ENCODE measurements at regions of chr19 and their contacts with region 1.

Region 1: DNA sequence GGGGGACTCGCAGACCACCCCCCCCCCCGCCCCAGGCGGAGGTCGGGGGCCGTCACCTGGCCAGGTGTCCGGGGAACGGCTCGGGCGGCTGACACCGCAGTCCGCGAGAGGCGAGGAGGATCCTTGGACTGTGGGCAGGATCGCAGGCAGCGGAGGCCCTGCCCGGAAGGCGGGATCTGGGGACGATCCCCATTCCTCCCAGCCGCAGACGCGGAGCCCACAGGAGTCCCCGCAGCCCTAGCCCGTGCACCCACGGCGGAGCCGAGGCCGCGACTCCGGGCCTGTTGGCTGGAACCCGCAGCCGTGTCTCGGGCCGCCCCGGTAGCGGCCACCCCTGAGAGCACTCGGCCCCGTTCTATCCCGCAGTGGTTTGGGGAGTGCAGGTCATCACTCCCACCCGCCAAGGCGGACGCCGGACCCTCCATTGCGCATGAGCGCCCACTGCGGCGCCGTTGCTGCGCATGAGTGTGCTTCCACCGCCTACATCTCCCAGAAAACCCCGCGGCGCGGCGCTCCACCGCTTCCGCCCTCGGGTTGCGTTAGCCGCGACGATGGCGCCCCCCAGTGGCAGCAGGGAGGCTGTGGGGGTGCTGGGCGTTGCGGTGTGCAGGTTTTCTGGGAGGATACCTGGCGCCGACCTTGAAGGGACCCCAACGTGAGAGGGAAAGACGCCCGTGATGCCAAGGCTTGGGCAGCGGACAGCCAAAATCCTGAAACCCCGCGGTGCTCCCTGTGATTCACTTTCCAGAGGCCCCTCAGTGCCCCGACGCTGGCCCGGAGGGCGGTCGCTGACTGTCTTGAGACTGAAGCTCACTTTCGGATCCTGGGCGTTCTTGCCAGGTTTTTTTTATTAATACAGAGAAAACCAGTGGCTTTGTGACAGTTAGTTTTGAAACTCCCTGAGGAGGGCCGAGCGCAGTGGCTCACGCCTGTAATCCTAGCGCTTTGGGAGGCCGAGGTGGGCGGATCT is 4.4 kb upstream of the ZNF329 start:
- DNase-seq: peak; percentile 93 to 100 (median 97)
- ATAC-seq: peak; percentile 91
- H3K4me3 ChIP-seq: peak overlapping the region; percentile 76
- H3K4me3 Mint-ChIP-seq: peak overlapping the region; percentile 93
- H3K27ac ChIP-seq: peak overlapping the region; percentile 52 to 62
- H3K27ac Mint-ChIP-seq: peak overlapping the region; percentile 78
- H3K4me1 ChIP-seq: peaks cover 31% of the 10 kb centered on the region
- H3K4me1 Mint-ChIP-seq: peaks cover 23% of the 10 kb centered on the region
- H3K27me3 ChIP-seq: no peaks in the 10 kb centered on the region
- H3K27me3 Mint-ChIP-seq: no peaks in the 10 kb centered on the region
- CTCF ChIP-seq: peak; percentile 97

Region 2: DNA sequence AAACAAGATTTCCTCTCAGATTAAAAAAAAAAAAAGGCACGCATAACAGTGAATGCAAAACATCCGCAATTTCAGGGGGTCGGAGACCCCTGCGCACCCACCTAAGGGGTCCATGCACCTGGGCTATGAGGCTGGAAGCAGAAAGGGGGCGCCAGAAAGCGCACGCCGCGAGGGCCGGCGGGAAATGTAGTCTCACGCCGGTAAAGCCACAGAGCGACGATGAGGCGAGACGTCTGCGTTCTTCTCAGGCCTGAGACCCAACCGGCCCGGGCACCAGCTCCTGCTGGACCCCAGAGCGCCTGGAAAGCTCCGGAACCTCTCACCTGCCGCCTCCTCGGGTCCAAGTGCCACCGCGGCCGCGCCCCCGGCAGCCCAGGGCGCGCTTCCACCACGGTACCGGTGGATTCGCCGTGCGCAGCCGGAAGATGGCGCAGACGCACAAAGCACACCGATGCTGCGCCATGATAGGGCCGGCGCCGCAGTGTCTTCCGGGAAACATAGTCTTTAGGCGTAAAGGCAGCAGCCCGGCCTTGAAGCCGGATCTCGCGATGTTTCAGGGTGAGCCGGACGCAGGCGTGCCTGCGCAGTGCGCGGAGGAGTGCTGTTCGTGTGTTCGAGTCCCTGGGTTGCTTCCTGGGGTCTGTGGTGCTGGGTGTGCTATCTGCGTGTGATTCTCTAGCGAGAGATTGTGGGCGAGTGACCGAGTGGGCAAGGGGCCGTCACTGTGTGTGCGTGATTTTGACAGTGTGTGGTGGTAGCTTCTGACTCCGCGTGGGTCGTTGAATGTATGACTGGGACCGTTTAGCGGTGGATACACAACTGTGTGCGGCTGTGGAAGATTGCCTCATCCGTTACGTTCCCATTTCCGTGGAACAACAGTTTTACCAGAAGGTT is 1761.6 kb before region 1 on chr19 and contains the start of gene ZNF582:
- CTCF ChIA-PET with region 1: no interaction called
- POLR2A ChIA-PET with region 1: no interaction called
- intact Hi-C with region 1: loop called in 1 of 2 experiments (anchors 10 kb)
- DNase-seq: peak; percentile 83 to 97 (median 89)
- ATAC-seq: peak; percentile 97
- H3K4me3 ChIP-seq: peak within 1 kb of the TSS; percentile 66
- H3K4me3 Mint-ChIP-seq: peak within 1 kb of the TSS; percentile 97
- H3K27ac ChIP-seq: peak within 1 kb of the TSS; percentile 92 to 93
- H3K27ac Mint-ChIP-seq: peak within 1 kb of the TSS; percentile 78
- H3K4me1 ChIP-seq: peaks cover 10% of the 10 kb centered on the region
- H3K4me1 Mint-ChIP-seq: peaks cover 6% of the 10 kb centered on the region
- H3K27me3 ChIP-seq: no peaks in the 10 kb centered on the region
- H3K27me3 Mint-ChIP-seq: no peaks in the 10 kb centered on the region
- CTCF ChIP-seq: peak; percentile 80
- total RNA-seq, gene ZNF582: 1.5 to 1.8 TPM

Region 3: DNA sequence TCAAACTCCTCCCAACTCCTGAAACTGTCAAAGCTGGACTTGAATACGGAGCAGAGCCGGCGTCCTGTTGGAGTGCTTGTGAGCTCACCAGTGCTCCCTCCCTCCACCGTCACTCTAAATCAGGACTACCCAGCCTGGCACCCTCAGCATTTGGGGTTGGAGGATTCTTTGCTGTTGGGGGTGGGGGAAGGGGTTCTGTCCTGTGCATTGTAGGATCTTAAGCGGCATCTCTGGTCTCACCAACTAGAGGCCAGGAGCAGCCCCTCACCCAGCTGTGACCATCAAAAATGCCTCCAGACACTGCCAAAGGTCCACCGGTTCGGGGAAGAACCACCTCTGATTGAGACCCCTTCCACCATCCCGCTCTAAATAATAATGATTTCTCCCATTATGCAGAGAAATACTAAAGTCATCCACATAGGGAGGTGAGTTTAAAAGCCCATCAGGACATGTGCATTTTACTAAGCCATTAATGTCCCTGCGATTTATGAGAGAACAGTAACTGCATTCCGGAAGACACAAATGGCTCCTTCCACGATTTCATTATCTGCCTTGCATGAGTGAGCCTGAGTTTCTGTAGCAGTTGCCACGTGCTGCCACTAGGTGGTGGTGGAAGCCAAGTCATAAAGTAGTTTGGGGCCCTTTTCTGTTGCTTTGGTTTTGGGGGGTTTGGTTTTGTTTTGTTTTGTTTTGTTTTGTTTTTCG is 1051.2 kb before region 1 on chr19:
- CTCF ChIA-PET with region 1: no interaction called
- POLR2A ChIA-PET with region 1: no interaction called
- intact Hi-C with region 1: loop called (anchors 5 kb)
- DNase-seq: peak; percentile 2 to 76 (median 42)
- ATAC-seq: peak; percentile 72
- H3K4me3 ChIP-seq: no peak overlapping the region
- H3K4me3 Mint-ChIP-seq: peak overlapping the region; percentile 8
- H3K27ac ChIP-seq: no peak overlapping the region
- H3K27ac Mint-ChIP-seq: no peak overlapping the region
- H3K4me1 ChIP-seq: peaks cover 10% of the 10 kb centered on the region
- H3K4me1 Mint-ChIP-seq: peaks cover 5% of the 10 kb centered on the region
- H3K27me3 ChIP-seq: peaks cover 8 to 14% of the 10 kb centered on the region in 2 experiments
- H3K27me3 Mint-ChIP-seq: peaks cover 5% of the 10 kb centered on the region
- CTCF ChIP-seq: peak; percentile 62

Region 4: DNA sequence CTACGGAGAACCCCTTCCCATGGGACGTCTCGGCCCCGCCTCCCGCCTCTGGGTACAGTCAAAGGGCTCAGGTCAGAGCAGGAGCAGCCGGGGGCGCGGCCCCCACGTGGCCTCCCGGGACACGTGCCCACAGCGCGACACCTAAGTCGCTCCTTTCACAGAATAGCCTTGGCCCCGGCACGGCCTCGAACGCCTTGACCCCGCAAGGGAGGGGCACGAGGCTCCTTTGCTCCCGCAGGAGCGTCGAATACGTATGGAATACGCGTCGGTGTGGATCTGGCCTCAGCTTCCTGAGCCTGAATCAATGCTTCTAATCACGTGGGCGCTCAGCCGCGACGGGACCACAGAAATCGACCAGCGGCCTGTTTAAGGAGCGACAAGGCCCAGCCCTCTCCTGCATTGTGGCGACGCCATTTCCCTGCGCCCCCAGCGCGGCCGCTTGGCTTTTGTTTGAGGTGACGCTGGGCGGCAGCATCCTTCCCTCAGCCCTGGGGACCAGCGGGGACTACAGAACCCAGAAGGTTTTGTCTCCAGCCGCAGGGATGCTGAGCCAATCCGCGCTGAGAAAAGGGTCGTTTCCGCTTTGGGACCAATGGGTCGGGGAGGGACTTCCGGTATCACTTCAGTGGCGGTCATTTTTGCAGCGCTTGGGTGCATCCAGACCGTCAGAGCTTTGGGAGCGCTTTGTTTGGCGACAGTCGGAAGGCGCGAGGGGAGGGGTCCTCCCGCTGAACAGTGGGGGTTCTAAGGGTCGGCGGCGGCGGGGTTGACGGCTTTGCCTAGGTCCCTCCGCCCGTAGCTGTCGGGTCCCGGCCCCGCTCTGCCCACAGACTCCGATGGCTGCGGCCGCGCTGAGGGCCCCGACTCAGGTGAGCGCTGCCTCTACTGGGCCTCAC is 571.2 kb before region 1 on chr19 and contains the start of gene ZIK1:
- CTCF ChIA-PET with region 1: no interaction called
- POLR2A ChIA-PET with region 1: no interaction called
- intact Hi-C with region 1: loop called in 1 of 2 experiments (anchors 10 kb)
- DNase-seq: peak; percentile 76 to 96 (median 84)
- ATAC-seq: peak; percentile 87
- H3K4me3 ChIP-seq: peak within 1 kb of the TSS; percentile 83
- H3K4me3 Mint-ChIP-seq: peak within 1 kb of the TSS; percentile 92
- H3K27ac ChIP-seq: peak within 1 kb of the TSS; percentile 26 to 38
- H3K27ac Mint-ChIP-seq: peak within 1 kb of the TSS; percentile 61
- H3K4me1 ChIP-seq: peaks cover 29% of the 10 kb centered on the region
- H3K4me1 Mint-ChIP-seq: peaks cover 23% of the 10 kb centered on the region
- H3K27me3 ChIP-seq: no peaks in the 10 kb centered on the region
- H3K27me3 Mint-ChIP-seq: no peaks in the 10 kb centered on the region
- CTCF ChIP-seq: no peak
- total RNA-seq, gene ZIK1: 6.9 to 7.1 TPM

Region 5: DNA sequence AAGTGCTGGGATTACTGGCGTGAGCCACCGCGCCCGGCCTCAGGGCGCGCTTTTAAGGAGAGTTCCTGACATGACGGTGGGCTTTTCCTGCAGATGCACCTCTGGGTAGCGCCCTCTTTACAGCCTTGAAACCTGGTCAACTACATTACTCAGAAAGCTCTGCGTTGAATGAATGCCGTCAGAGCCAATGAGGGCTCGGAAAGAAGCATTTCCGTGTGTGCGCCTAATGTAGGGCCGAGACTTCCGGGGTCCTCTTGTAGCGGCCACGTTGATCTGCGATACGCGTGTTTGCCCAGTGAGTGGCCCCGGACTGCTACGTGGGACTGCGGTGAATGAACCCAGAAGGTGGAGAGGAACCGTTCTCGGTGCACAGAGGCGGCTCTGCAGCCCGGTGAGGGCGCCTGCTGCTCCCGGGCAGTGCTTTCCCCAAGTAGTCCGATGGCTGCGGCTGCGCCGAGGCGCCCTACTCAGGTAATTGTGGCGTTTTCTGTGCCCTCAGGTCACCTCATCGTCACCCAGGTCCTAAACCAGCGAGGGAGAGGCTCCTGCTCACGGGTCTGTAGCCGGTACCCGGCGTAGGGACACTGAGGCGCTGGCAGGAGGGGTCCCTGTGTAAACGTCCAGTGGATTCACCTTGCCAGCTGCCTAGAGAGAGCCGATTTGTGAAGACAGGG is 335.4 kb before region 1 on chr19:
- CTCF ChIA-PET with region 1: no interaction called
- POLR2A ChIA-PET with region 1: no interaction called
- intact Hi-C with region 1: loop called in 1 of 2 experiments (anchors 10 kb)
- DNase-seq: peak; percentile 64 to 95 (median 73)
- ATAC-seq: peak; percentile 83
- H3K4me3 ChIP-seq: peak overlapping the region; percentile 98
- H3K4me3 Mint-ChIP-seq: peak overlapping the region; percentile 96
- H3K27ac ChIP-seq: peak overlapping the region; percentile 78 to 90
- H3K27ac Mint-ChIP-seq: peak overlapping the region; percentile 92
- H3K4me1 ChIP-seq: peaks cover 29% of the 10 kb centered on the region
- H3K4me1 Mint-ChIP-seq: peaks cover 56% of the 10 kb centered on the region
- H3K27me3 ChIP-seq: no peaks in the 10 kb centered on the region
- H3K27me3 Mint-ChIP-seq: no peaks in the 10 kb centered on the region
- CTCF ChIP-seq: peak; percentile 34

Region 6: GRCh38 chr19:57900311-57900710 is 254.7 kb before region 1 on chr19:
- CTCF ChIA-PET with region 1: no interaction called
- POLR2A ChIA-PET with region 1: no interaction called
- intact Hi-C with region 1: no loop called
- DNase-seq: no peak
- ATAC-seq: no peak
- H3K4me3 ChIP-seq: no peak overlapping the region
- H3K4me3 Mint-ChIP-seq: no peak overlapping the region
- H3K27ac ChIP-seq: no peak overlapping the region
- H3K27ac Mint-ChIP-seq: no peak overlapping the region
- H3K4me1 ChIP-seq: no peaks in the 10 kb centered on the region
- H3K4me1 Mint-ChIP-seq: peaks cover 5% of the 10 kb centered on the region
- H3K27me3 ChIP-seq: no peaks in the 10 kb centered on the region
- H3K27me3 Mint-ChIP-seq: no peaks in the 10 kb centered on the region
- CTCF ChIP-seq: no peak

Region 7: DNA sequence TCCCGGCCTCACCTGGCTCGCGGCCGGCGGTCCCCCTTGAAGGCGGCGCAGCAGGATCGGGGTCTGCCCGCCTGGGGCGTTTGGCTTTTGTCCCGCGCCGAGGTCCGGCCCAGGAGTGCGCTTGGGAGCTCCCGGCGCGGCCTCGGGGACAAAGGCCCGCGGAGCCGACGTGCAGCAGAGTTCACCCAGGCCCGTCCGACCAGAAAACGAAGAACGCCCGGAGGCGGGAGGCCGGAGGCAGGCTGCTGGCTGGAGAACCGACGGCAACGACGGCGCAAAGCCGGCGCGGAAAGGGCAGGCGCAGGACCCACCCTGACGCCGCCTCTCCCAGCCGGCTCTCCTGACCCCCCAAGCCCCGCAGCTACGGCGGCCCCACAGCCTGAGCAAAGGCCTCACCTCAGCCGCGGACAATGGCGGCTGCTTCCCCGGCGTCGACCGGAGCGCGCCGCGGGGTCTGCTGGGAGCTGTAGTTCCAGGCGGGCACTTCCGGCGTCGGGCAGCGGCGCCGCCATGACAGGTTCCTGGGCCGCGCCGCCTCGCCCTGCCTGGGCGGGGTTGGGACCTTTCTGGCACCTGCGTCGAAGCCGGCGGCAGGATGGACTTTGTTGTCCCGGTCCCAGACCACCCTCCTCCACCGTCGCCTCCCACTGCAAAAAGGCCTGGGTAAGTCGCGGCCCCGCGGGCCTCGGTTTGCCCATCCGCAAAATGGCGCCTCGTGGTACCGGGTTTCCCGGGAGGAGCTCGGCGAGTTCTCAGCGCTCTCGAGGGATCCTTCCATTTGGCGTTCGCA is 152.4 kb before region 1 on chr19 and contains the start of gene ZNF606:
- CTCF ChIA-PET with region 1: interaction called, 3 read pairs
- POLR2A ChIA-PET with region 1: interaction called, 8 read pairs
- intact Hi-C with region 1: loop called (anchors 5 kb)
- DNase-seq: peak; percentile 69 to 93 (median 81)
- ATAC-seq: peak; percentile 96
- H3K4me3 ChIP-seq: peak within 1 kb of the TSS; percentile 95
- H3K4me3 Mint-ChIP-seq: peak within 1 kb of the TSS; percentile 90
- H3K27ac ChIP-seq: peak within 1 kb of the TSS; percentile 71 to 87
- H3K27ac Mint-ChIP-seq: peak within 1 kb of the TSS; percentile 93
- H3K4me1 ChIP-seq: peaks cover 24% of the 10 kb centered on the region
- H3K4me1 Mint-ChIP-seq: peaks cover 23% of the 10 kb centered on the region
- H3K27me3 ChIP-seq: no peaks in the 10 kb centered on the region
- H3K27me3 Mint-ChIP-seq: no peaks in the 10 kb centered on the region
- CTCF ChIP-seq: no peak
- total RNA-seq, gene ZNF606: 11.1 to 13.6 TPM

Region 8: GRCh38 chr19:58107778-58108545 is 47.0 kb before region 1 on chr19:
- CTCF ChIA-PET with region 1: no interaction called
- POLR2A ChIA-PET with region 1: no interaction called
- intact Hi-C with region 1: no loop called
- DNase-seq: no peak
- ATAC-seq: no peak
- H3K4me3 ChIP-seq: no peak overlapping the region
- H3K4me3 Mint-ChIP-seq: no peak overlapping the region
- H3K27ac ChIP-seq: no peak overlapping the region
- H3K27ac Mint-ChIP-seq: no peak overlapping the region
- H3K4me1 ChIP-seq: no peaks in the 10 kb centered on the region
- H3K4me1 Mint-ChIP-seq: no peaks in the 10 kb centered on the region
- H3K27me3 ChIP-seq: no peaks in the 10 kb centered on the region
- H3K27me3 Mint-ChIP-seq: no peaks in the 10 kb centered on the region
- CTCF ChIP-seq: no peak

Region 9: DNA sequence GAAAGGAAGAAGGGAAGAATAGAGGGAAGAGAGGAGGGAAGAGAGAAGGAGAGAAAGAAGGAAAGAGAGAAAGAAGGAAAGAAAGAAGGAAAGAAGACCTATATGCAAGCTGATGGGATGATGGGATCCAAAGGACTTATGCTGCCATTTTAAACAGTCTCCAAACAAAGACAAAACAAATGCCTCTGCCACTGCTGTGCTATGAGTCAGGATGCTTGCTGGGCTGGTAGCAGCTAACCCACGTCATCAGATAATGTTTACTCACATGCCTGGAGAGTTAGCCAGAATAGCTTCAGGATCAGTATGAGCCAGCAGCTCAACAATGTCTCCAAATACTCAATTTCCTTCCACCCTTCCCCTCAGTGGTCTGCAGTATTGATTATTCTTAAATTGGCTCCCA is 15.9 kb after region 1 on chr19:
- CTCF ChIA-PET with region 1: no interaction called
- POLR2A ChIA-PET with region 1: no interaction called
- intact Hi-C with region 1: no loop called
- DNase-seq: no peak
- ATAC-seq: no peak
- H3K4me3 ChIP-seq: no peak overlapping the region
- H3K4me3 Mint-ChIP-seq: no peak overlapping the region
- H3K27ac ChIP-seq: no peak overlapping the region
- H3K27ac Mint-ChIP-seq: no peak overlapping the region
- H3K4me1 ChIP-seq: no peaks in the 10 kb centered on the region
- H3K4me1 Mint-ChIP-seq: no peaks in the 10 kb centered on the region
- H3K27me3 ChIP-seq: no peaks in the 10 kb centered on the region
- H3K27me3 Mint-ChIP-seq: no peaks in the 10 kb centered on the region
- CTCF ChIP-seq: no peak

Region 10: DNA sequence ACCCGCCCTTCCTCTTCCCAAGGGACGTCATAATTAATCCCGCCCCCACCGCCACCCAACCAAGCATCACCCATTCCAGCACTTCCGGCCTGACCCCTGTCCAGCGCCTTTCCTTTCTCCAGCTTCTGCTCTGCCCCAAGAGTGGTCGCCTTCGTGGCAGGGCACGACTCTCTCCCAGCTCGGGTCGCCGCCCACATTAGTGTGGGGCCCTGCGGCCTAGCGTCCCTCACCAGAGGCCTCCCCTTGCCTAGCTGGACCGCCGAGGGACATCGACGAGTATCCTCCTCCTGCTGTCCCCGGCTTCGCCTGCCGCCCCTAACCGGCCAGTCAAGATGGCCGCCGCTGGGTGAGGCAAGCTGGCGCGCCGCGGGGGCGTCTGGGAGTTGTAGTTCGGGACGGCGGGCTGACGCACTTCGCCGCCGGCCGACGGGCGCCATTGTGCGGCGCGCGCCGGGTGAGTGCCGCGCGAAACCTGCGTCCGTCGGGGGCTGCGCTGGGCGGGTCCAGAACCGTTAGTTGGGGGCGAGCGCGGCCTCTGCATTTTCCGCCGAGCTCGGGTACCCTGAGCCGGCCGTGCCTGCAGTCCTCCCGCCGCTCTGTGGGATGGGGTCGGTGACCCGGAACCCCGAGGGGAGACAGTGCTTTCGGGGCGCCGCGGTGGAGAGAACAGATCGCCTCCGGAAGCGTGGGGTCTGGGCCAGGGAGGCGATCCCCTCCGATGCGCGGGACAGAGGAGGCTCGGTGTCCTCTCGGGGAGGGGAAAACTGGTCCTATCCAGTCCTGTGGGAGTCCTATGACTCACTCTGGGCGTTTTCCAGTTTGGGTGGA is 28.2 kb after region 1 on chr19 and contains the start of gene ZNF274:
- CTCF ChIA-PET with region 1: no interaction called
- POLR2A ChIA-PET with region 1: interaction called, 13 read pairs
- intact Hi-C with region 1: no loop called
- DNase-seq: peak; percentile 89 to 96 (median 92)
- ATAC-seq: peak; percentile 85
- H3K4me3 ChIP-seq: peak within 1 kb of the TSS; percentile 99
- H3K4me3 Mint-ChIP-seq: peak within 1 kb of the TSS; percentile 97
- H3K27ac ChIP-seq: peak within 1 kb of the TSS; percentile 99 to 100
- H3K27ac Mint-ChIP-seq: peak within 1 kb of the TSS; percentile 100
- H3K4me1 ChIP-seq: peaks cover 27% of the 10 kb centered on the region
- H3K4me1 Mint-ChIP-seq: peaks cover 23% of the 10 kb centered on the region
- H3K27me3 ChIP-seq: no peaks in the 10 kb centered on the region
- H3K27me3 Mint-ChIP-seq: no peaks in the 10 kb centered on the region
- CTCF ChIP-seq: no peak
- total RNA-seq, gene ZNF274: 51.0 to 51.4 TPM